ENCODE measurements at regions of chr12 and their contacts with region 1.

Region 1: GRCh38 chr12:30840715-30841114 is 85.8 kb upstream of the TSPAN11 start:
- DNase-seq: no peak
- H3K4me3 ChIP-seq: no peak overlapping the region
- H3K27ac ChIP-seq: no peak overlapping the region
- H3K4me1 ChIP-seq: peaks cover 6% of the 10 kb centered on the region
- H3K27me3 ChIP-seq: no peaks in the 10 kb centered on the region
- CTCF ChIP-seq: no peak

Region 2: GRCh38 chr12:29528161-29528560 is 1312.6 kb before region 1 on chr12:
- CTCF ChIA-PET with region 1: no interaction called
- dilution Hi-C with region 1: no loop called
- in situ Hi-C with region 1: no loop called
- intact Hi-C with region 1: loop called (anchors 5 kb)
- DNase-seq: no peak
- H3K4me3 ChIP-seq: no peak overlapping the region
- H3K27ac ChIP-seq: no peak overlapping the region
- H3K4me1 ChIP-seq: no peaks in the 10 kb centered on the region
- H3K27me3 ChIP-seq: no peaks in the 10 kb centered on the region
- CTCF ChIP-seq: no peak

Region 3: GRCh38 chr12:30953951-30954751 is 113.4 kb after region 1 on chr12:
- CTCF ChIA-PET with region 1: no interaction called
- dilution Hi-C with region 1: no loop called
- in situ Hi-C with region 1: no loop called
- intact Hi-C with region 1: no loop called
- DNase-seq: no peak
- H3K4me3 ChIP-seq: no peak overlapping the region
- H3K27ac ChIP-seq: no peak overlapping the region
- H3K4me1 ChIP-seq: peaks cover 4% of the 10 kb centered on the region
- H3K27me3 ChIP-seq: peaks cover 1% of the 10 kb centered on the region
- CTCF ChIP-seq: no peak